ENCODE measurements at regions of chr3 and their contacts with region 1.

Region 1: GRCh38 chr3:142580061-142580423 is 1.5 kb upstream of the ATR start:
- DNase-seq: no peak
- ATAC-seq: no peak
- H3K4me3 ChIP-seq: no peak overlapping the region
- H3K27ac ChIP-seq: no peak overlapping the region
- H3K4me1 ChIP-seq: peaks cover 13 to 24% (median 20%) of the 10 kb centered on the region in 3 donors
- H3K27me3 ChIP-seq: no peaks in the 10 kb centered on the region
- CTCF ChIP-seq: no peak

Region 2: DNA sequence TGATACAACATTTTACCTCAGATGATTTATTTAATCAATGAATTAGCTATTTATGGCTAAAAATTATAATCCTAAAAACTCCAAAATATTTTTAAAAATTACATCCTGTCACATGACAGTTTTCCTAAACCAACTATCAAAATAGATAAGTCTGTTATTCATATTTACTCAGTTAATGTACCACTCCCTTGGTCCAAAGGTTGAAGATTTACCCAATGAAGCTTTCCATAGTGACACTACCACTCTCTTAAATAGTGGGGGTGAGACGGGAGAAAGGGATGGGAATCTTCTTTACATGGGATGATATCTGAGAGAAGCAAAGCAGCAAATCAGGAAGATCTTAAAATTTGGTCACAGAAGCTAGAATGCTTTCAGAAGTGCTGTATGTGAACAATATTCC is 162.7 kb before region 1 on chr3:
- intact Hi-C with region 1: no loop called
- DNase-seq: no peak
- ATAC-seq: no peak
- H3K4me3 ChIP-seq: no peak overlapping the region
- H3K27ac ChIP-seq: no peak overlapping the region
- H3K4me1 ChIP-seq: no peaks in the 10 kb centered on the region
- H3K27me3 ChIP-seq: no peaks in the 10 kb centered on the region
- CTCF ChIP-seq: no peak

Region 3: GRCh38 chr3:142429582-142429981 is 150.5 kb before region 1 on chr3:
- intact Hi-C with region 1: no loop called
- DNase-seq: no peak
- ATAC-seq: no peak
- H3K4me3 ChIP-seq: no peak overlapping the region
- H3K27ac ChIP-seq: no peak overlapping the region
- H3K4me1 ChIP-seq: peaks cover 0 to 11% (median 3%) of the 10 kb centered on the region in 3 donors
- H3K27me3 ChIP-seq: no peaks in the 10 kb centered on the region
- CTCF ChIP-seq: no peak

Region 4: GRCh38 chr3:142542054-142542453 is 38.0 kb before region 1 on chr3:
- intact Hi-C with region 1: no loop called
- DNase-seq: no peak
- ATAC-seq: no peak
- H3K4me3 ChIP-seq: no peak overlapping the region
- H3K27ac ChIP-seq: no peak overlapping the region
- H3K4me1 ChIP-seq: no peaks in the 10 kb centered on the region
- H3K27me3 ChIP-seq: no peaks in the 10 kb centered on the region
- CTCF ChIP-seq: no peak

Region 5: DNA sequence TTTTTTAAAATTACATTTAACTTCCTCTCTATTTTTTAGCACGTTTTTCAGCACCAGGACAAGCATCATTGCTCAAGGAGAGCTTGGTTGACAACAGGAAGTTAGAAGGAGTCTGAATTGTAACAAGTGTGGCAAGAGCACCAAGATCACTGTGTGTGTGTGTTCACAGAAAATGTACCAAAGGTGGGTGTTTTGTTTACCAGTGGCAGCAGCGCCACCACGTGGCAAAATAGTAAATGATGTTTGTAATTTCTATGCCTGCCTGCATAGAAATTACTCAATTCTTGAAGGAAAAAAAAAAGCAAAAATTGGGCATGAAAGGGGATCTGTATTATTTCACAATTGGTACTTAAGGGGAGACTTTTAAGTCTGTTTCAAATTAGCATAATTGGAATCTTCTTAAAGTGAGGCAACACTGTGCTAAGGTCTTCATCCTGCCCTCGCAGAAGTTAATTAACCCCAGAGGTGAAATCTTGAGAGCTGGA is 414.0 kb after region 1 on chr3:
- intact Hi-C with region 1: loop called in 2 of 3 experiments (anchors 5 kb)
- DNase-seq: peak in 2 of 6 donors; percentile 14 to 46
- ATAC-seq: peak in 3 of 4 donors; percentile 62 to 75 (median 73)
- H3K4me3 ChIP-seq: no peak overlapping the region
- H3K27ac ChIP-seq: no peak overlapping the region
- H3K4me1 ChIP-seq: no peaks in the 10 kb centered on the region
- H3K27me3 ChIP-seq: peaks cover 0 to 5% (median 0%) of the 10 kb centered on the region in 4 donors
- CTCF ChIP-seq: peak in 3 of 4 donors; percentile 40 to 56 (median 41)

Region 6: DNA sequence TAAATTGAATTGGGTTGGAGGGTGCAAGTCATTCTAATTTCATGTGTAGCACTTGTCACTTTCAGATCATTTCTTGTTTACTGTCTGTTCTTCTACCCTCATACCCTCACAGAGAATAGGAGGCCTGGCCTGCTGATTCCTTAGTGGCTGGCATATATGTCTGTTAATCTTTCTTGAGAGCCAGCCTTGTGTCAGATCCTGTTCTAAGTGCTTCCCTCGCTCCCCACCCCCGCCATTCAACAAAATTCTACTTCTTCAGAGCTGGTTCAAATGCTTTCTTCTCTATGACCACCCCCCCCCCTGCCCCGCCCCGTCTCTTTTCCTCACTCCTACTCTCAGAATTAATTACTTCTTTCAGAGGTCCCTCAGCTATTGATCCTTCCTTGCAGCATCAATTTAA is 419.8 kb after region 1 on chr3:
- intact Hi-C with region 1: loop called in 1 of 3 experiments (anchors 5 kb)
- DNase-seq: no peak
- ATAC-seq: no peak
- H3K4me3 ChIP-seq: peak overlapping the region in 1 of 4 donors; percentile 93
- H3K27ac ChIP-seq: no peak overlapping the region
- H3K4me1 ChIP-seq: peaks cover 0 to 14% (median 11%) of the 10 kb centered on the region in 3 donors
- H3K27me3 ChIP-seq: peaks cover 0 to 5% (median 0%) of the 10 kb centered on the region in 4 donors
- CTCF ChIP-seq: no peak

Measured in pancreas (tissue), 10 donors.